ENCODE measurements at regions of chr7 and their contacts with region 1.

Region 1: GRCh38 chr7:77321300-77321699 is 94.8 kb downstream of the GSAP start:
- DNase-seq: no peak
- ATAC-seq: peak in 2 of 4 donors; percentile 24 to 65
- H3K4me3 ChIP-seq: no peak overlapping the region
- H3K27ac ChIP-seq: no peak overlapping the region
- H3K4me1 ChIP-seq: peaks cover 0 to 10% (median 0%) of the 10 kb centered on the region in 12 donors
- H3K27me3 ChIP-seq: no peaks in the 10 kb centered on the region
- CTCF ChIP-seq: no peak
- POLR2A ChIP-seq: no peak

Region 2: DNA sequence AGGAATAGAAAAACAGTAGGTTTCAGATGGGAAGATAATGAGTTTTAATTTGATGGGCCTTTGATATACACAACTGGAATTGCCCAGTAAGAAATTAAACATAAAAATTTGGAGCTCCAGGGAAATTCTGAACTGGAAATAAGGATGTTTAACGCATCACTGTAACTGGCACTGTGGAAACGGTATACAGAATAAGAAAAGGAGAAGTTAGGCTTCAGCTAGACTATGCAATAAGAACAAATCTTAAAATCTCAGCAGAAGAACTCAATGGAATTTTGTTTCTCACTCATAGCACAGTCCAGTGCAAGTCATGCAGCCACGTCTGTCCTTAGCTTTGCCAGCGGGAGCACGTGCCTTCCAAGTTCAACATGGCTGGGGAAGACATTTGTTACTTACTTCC is 68.8 kb before region 1 on chr7:
- intact Hi-C with region 1: loop called in 5 of 10 experiments (anchors 5 kb)
- DNase-seq: no peak
- ATAC-seq: peak in 1 of 4 donors; percentile 28
- H3K4me3 ChIP-seq: no peak overlapping the region
- H3K27ac ChIP-seq: no peak overlapping the region
- H3K4me1 ChIP-seq: peaks cover 0 to 14% (median 0%) of the 10 kb centered on the region in 12 donors
- H3K27me3 ChIP-seq: peaks cover 0 to 3% (median 0%) of the 10 kb centered on the region in 9 donors
- CTCF ChIP-seq: no peak
- POLR2A ChIP-seq: no peak

Region 3: GRCh38 chr7:77954773-77955555 is 633.7 kb after region 1 on chr7:
- intact Hi-C with region 1: no loop called
- DNase-seq: no peak
- ATAC-seq: no peak
- H3K4me3 ChIP-seq: no peak overlapping the region
- H3K27ac ChIP-seq: no peak overlapping the region
- H3K4me1 ChIP-seq: no peaks in the 10 kb centered on the region
- H3K27me3 ChIP-seq: no peaks in the 10 kb centered on the region
- CTCF ChIP-seq: no peak
- POLR2A ChIP-seq: no peak

Measured in heart left ventricle (tissue), 16 donors.